ENCODE measurements at regions of chr11 and their contacts with region 1.

Region 1: DNA sequence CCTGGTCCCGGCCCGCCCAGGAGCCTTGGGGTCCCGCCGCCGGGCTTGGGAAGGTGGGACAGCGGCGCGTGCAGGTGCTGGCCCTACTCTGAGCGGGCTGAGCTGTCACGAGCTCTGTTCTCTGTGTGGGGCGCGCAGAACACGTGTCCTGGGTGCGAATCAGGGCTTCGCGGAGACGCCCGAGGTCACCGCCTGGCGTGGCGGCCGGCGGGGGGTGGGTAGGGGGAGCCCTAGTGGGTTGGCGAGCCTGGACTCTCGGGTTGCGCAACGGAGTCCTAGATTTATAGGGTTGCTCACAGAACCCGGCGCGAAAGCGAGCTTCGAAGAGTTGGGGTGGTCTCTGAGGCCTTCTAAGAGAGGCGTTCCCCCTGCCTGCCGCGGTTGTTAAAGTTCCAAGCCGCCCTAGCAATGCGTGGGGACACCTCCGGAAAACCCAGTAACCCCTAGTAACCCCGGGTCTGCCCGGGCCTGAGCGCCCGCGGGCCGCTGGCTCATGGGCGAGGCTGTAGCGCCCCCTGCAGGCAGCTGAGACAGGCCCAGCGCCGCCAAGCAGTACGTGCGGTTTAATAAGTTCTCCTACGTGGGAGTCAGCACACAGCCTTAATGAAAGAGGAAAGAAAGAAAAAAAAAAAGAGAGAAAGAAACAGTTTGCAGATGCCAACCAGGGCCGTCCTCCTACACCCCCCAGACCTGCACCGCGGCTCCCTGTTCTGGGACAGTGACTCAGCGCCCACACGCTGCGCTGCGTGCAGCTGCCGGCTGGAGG is 2.8 kb downstream of the ADM start:
- DNase-seq: peak; percentile 96
- H3K4me3 ChIP-seq: peak overlapping the region; percentile 14 to 96 (median 69)
- H3K27ac ChIP-seq: peak overlapping the region in 7 of 8 donors; percentile 31 to 94 (median 55)
- H3K4me1 ChIP-seq: peaks cover 23 to 64% (median 55%) of the 10 kb centered on the region in 6 donors
- H3K27me3 ChIP-seq: peaks cover 0 to 37% (median 17%) of the 10 kb centered on the region in 7 donors
- CTCF ChIP-seq: peak; percentile 90 to 99 (median 99)
- POLR2A ChIP-seq: no peak

Region 2: DNA sequence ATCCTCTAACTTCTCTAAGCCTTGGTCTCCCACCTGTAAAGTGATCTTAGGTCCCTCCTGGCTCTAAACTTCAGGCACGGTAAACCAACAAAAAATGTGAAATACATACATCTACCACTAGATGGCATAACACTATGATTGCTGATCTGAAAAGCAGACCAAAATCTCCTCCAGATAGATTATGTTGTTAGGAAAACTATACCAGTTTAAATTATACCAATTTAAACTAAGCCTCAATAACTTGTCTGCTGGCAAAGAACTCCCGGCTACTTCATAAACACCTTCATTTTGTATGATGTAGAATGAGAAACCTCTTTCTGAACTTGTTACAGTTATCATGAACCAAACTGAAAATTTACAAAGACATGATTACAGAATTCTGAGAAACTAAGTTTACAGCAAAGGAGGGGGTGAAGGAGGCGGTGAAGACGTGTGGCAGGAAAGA is 99.5 kb before region 1 on chr11:
- intact Hi-C with region 1: loop called (anchors 5 kb)
- DNase-seq: no peak
- H3K4me3 ChIP-seq: no peak overlapping the region
- H3K27ac ChIP-seq: no peak overlapping the region
- H3K4me1 ChIP-seq: peaks cover 0 to 7% (median 0%) of the 10 kb centered on the region in 6 donors
- H3K27me3 ChIP-seq: no peaks in the 10 kb centered on the region
- CTCF ChIP-seq: peak; percentile 23 to 83 (median 65)
- POLR2A ChIP-seq: no peak